ENCODE measurements at regions of chr21 and their contacts with region 1.

Region 1: GRCh38 chr21:41315726-41316125 is 875 bp upstream of the FAM3B start:
- DNase-seq: no peak
- ATAC-seq: no peak
- H3K4me3 ChIP-seq: no peak overlapping the region
- H3K4me3 Mint-ChIP-seq: peak overlapping the region; percentile 29
- H3K27ac ChIP-seq: no peak overlapping the region
- H3K27ac Mint-ChIP-seq: no peak overlapping the region
- H3K4me1 ChIP-seq: peaks cover 9 to 15% of the 10 kb centered on the region in 2 donors
- H3K4me1 Mint-ChIP-seq: peaks cover 5% of the 10 kb centered on the region
- H3K27me3 ChIP-seq: peaks cover 0 to 42% (median 16%) of the 10 kb centered on the region in 4 experiments
- H3K27me3 Mint-ChIP-seq: peaks cover 49% of the 10 kb centered on the region
- CTCF ChIP-seq: no peak

Region 2: DNA sequence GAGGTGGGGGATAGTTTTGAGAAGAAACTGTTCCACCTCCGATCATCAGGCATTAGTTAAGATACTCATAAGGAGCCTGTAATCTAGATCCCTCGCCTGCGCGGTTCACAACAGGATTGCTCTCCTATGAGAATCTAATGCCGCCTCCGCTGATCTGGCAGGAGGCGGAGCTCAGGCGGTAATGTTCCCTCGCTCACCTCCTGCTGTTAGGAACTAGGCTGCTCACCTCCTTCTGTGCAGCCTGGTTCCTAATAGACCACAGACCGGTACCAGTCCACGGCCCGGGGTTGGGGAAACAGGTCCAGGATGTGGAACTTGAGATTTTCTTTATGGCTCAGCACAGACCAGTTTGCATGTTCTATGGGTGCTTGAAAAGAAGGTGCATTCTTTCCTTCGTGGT is 26.3 kb before region 1 on chr21:
- CTCF ChIA-PET with region 1: no interaction called
- POLR2A ChIA-PET with region 1: no interaction called
- intact Hi-C with region 1: loop called (anchors 2 kb)
- DNase-seq: no peak
- ATAC-seq: no peak
- H3K4me3 ChIP-seq: no peak overlapping the region
- H3K4me3 Mint-ChIP-seq: no peak overlapping the region
- H3K27ac ChIP-seq: no peak overlapping the region
- H3K27ac Mint-ChIP-seq: no peak overlapping the region
- H3K4me1 ChIP-seq: peaks cover 0 to 5% of the 10 kb centered on the region in 2 donors
- H3K4me1 Mint-ChIP-seq: peaks cover 3% of the 10 kb centered on the region
- H3K27me3 ChIP-seq: peaks cover 0 to 24% (median 10%) of the 10 kb centered on the region in 4 experiments
- H3K27me3 Mint-ChIP-seq: peaks cover 30% of the 10 kb centered on the region
- CTCF ChIP-seq: no peak

Region 3: DNA sequence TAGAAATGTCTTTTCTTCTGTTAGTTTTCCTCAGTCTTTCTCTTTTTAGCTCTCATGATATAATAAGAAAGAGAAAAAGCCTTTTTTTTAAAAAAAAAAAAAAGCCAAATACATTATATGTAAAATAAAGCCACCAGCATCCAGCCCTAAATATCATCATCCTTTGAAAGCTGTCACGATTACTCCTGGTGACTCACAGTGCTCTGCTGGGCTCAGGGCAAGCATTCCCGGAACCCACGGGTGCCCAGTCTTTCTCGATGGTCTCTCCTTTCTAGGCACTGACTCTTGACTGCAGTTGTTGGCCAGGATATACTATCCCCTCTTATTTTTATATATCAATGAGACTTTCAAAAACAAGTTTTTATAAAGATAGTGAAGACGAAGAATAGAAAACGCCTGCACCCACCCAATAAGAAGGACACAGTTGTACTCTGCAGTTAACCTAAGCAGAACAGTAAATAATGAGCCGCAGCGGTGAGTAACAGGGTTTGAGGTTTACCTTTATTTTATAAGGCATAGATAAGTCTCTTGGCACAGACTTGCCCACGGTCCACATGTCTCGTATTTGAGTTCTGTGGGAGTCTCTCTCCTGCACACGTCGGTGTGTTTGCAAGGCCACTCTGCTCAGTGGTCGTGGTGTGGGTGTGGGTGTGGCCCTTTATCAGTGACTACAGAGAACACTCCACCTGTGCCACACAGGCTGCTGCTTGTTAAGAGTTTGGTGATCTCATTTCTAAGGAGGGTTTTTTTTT is 30.4 kb after region 1 on chr21:
- CTCF ChIA-PET with region 1: no interaction called
- POLR2A ChIA-PET with region 1: no interaction called
- intact Hi-C with region 1: no loop called
- DNase-seq: no peak
- ATAC-seq: no peak
- H3K4me3 ChIP-seq: no peak overlapping the region
- H3K4me3 Mint-ChIP-seq: no peak overlapping the region
- H3K27ac ChIP-seq: no peak overlapping the region
- H3K27ac Mint-ChIP-seq: no peak overlapping the region
- H3K4me1 ChIP-seq: no peaks in the 10 kb centered on the region
- H3K4me1 Mint-ChIP-seq: no peaks in the 10 kb centered on the region
- H3K27me3 ChIP-seq: peaks cover 0 to 9% (median 0%) of the 10 kb centered on the region in 4 experiments
- H3K27me3 Mint-ChIP-seq: peaks cover 18% of the 10 kb centered on the region
- CTCF ChIP-seq: no peak

Measured in B cell (primary cell).